GM10248 (cell line): ENCODE measurements at regions of chr1 and their contacts with region 1.

Region 1: GRCh38 chr1:26614655-26615411 is 81.0 kb upstream of the ARID1A start:
- DNase-seq: no peak
- CTCF ChIP-seq: no peak

Region 2: GRCh38 chr1:26555550-26556510 is 59.0 kb before region 1 on chr1:
- CTCF ChIA-PET with region 1: no interaction called
- POLR2A ChIA-PET with region 1: no interaction called
- DNase-seq: no peak
- CTCF ChIP-seq: no peak

Region 3: GRCh38 chr1:26932531-26932930 is 317.7 kb after region 1 on chr1:
- CTCF ChIA-PET with region 1: interaction called, 3 read pairs
- POLR2A ChIA-PET with region 1: interaction called, 13 read pairs
- DNase-seq: peak; percentile 71
- CTCF ChIP-seq: no peak